ENCODE measurements at regions of chr11 and their contacts with region 1.

Region 1: DNA sequence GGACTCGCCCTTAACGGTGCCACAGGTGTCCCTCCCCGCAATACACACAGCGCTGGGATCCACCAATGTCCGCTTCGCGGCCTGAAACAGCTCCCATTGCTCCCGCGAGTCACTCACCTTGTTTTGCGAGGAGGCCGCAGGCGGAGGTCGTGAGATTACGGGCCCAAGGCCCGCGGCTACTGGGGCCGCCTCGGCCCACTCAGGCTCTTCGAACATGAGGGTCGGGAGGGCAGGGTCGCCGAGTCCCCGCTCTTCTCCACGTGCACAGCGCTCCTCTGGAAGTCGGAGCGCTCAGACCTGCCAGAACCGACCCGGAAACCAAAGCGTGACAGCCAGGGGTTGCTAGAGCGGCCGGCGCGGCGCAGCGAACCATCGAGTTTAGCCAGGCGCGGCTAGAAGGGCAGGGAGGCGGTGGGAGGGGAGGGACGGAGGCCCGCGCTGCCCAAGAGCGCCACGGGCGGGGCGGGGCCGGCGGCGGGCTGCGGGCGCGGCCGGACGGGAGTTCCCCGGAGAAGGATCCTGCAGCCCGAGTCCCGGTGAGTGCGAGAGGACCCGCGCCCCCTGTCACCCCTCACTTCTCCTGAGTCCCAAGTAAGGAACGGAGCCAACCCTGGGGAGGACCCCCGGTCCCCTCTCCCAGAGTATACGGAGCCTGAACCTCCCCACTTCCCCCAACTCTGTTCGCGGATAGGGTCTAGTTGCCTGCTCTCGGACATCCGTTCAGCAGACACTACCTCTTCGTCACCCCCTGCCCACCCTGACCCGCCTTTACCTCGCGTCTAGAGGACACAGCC is at the starts of genes ILK and RRP8:
- DNase-seq: peak; percentile 91 to 95 (median 93)
- ATAC-seq: peak; percentile 88
- H3K4me3 ChIP-seq: peak within 1 kb of the TSS; percentile 95
- H3K27ac ChIP-seq: peak within 1 kb of the TSS; percentile 87
- H3K4me1 ChIP-seq: peaks cover 31 to 32% of the 10 kb centered on the region in 2 experiments
- H3K27me3 ChIP-seq: no peaks in the 10 kb centered on the region
- CTCF ChIP-seq: 0 out of 6 replicates have a peak, but pooled peaks of 1 of the 3 experiments have one; percentile 22
- EP300 ChIP-seq: no peak
- POLR2A ChIP-seq: peak; percentile 84
- RAD21 ChIP-seq: peak; percentile 3 to 23; a peak in 2 of 4 replicates
- polyA plus RNA-seq, gene ILK: 49.3 to 85.1 TPM
- polyA plus RNA-seq, gene RRP8: 5.7 to 11.4 TPM

Region 2: GRCh38 chr11:6473481-6474422 is 129.7 kb before region 1 on chr11 and contains the start of gene TRIM3:
- CTCF ChIA-PET with region 1: no interaction called
- POLR2A ChIA-PET with region 1: interaction called, 7 read pairs
- in situ Hi-C with region 1: no loop called
- intact Hi-C with region 1: loop called (anchors 2 kb)
- DNase-seq: peak; percentile 86 to 99 (median 99)
- ATAC-seq: peak; percentile 88
- H3K4me3 ChIP-seq: peak within 1 kb of the TSS; percentile 65
- H3K27ac ChIP-seq: peak within 1 kb of the TSS; percentile 43
- H3K4me1 ChIP-seq: peaks cover 20 to 22% of the 10 kb centered on the region in 2 experiments; a peak in 4 of 5 replicates
- H3K27me3 ChIP-seq: no peaks in the 10 kb centered on the region
- CTCF ChIP-seq: peak in 2 of 3 experiments; percentile 18 to 41; a peak in 4 of 6 replicates
- EP300 ChIP-seq: no peak
- POLR2A ChIP-seq: no peak; the same call in none of the 2 replicates
- RAD21 ChIP-seq: no peak
- polyA plus RNA-seq, gene TRIM3: 0.45 to 0.81 TPM

Region 3: DNA sequence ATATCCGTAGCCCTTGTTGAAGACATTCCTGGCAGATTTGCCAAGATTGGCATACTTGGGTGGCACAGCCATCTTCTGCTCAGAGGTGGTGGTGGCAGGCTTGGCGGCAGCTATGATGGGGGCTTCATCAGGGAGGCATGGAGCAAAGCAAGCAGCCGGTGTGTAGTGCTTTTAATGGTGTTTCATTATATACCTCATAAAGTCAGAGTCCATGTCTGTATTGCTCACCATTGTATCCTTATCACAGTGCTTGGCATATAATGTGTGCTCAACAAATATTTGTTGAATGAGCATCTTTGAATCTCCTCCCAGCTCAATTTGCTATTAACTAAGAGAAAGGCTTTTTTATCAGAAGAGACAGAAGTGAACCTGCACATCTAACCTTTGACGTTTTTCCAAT is 114.2 kb before region 1 on chr11:
- CTCF ChIA-PET with region 1: no interaction called
- POLR2A ChIA-PET with region 1: no interaction called
- in situ Hi-C with region 1: no loop called
- intact Hi-C with region 1: no loop called
- DNase-seq: no peak
- ATAC-seq: no peak
- H3K4me3 ChIP-seq: no peak overlapping the region
- H3K27ac ChIP-seq: no peak overlapping the region
- H3K4me1 ChIP-seq: no peaks in the 10 kb centered on the region; a peak in 1 of 5 replicates
- H3K27me3 ChIP-seq: no peaks in the 10 kb centered on the region
- CTCF ChIP-seq: no peak
- EP300 ChIP-seq: no peak
- POLR2A ChIP-seq: no peak
- RAD21 ChIP-seq: no peak

Region 4: GRCh38 chr11:6568191-6568918 is 35.1 kb before region 1 on chr11:
- CTCF ChIA-PET with region 1: no interaction called
- POLR2A ChIA-PET with region 1: interaction called, 8 read pairs
- in situ Hi-C with region 1: no loop called
- intact Hi-C with region 1: loop called (anchors 2 kb)
- DNase-seq: peak; percentile 83 to 94 (median 89)
- ATAC-seq: peak; percentile 88
- H3K4me3 ChIP-seq: no peak overlapping the region
- H3K27ac ChIP-seq: peak overlapping the region; percentile 61
- H3K4me1 ChIP-seq: peaks cover 41 to 54% of the 10 kb centered on the region in 2 experiments
- H3K27me3 ChIP-seq: no peaks in the 10 kb centered on the region
- CTCF ChIP-seq: peak; percentile 21 to 50 (median 36); a peak in 5 of 6 replicates
- EP300 ChIP-seq: peak; percentile 64; the same call in 1 of the 2 replicates
- POLR2A ChIP-seq: no peak
- RAD21 ChIP-seq: no peak

Region 5: DNA sequence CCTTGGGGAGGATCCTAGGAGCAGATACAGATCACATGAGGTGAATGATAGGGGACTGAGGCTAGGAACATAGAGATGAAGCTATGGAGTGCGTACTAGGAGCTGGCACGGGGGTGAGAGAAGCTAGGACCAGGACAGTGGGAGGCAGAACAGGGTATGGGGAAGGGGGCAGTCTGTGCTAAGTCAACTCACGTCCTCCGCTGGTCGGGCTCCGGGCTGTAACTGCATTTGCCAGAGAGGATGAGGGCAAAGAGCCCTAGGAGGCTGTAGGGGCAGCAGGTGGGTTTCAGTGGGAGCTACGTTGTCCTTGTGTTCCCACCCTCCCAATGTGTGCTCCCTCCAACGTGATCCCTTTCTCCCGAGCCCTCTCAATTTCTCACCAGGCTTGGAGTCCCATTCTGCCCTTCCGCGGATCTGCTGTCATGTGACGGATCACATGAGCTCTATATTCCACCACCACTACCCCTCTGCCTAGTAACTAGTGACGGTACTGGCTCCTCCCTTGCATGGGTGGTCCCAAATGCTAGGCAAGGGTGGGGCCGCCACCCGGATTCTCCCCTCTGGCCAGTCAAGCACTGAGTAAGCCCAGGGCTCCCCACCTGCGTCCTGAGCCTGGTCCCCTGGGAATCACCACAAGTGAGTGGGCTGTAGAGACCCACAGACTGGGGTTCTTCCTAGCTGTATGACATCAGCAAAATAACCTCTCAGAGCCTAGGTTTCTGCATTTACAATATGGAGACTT is 15.7 kb after region 1 on chr11 and contains the start of gene TPP1:
- CTCF ChIA-PET with region 1: no interaction called
- POLR2A ChIA-PET with region 1: interaction called, 17 read pairs
- in situ Hi-C with region 1: no loop called
- intact Hi-C with region 1: no loop called
- DNase-seq: peak; percentile 92 to 97 (median 94)
- ATAC-seq: peak; percentile 97
- H3K4me3 ChIP-seq: peak within 1 kb of the TSS; percentile 71
- H3K27ac ChIP-seq: peak within 1 kb of the TSS; percentile 86
- H3K4me1 ChIP-seq: peaks cover 8 to 36% of the 10 kb centered on the region in 2 experiments
- H3K27me3 ChIP-seq: peaks cover 0 to 9% of the 10 kb centered on the region in 2 experiments; a peak in 1 of 5 replicates
- CTCF ChIP-seq: no peak
- EP300 ChIP-seq: no peak; the same call in 1 of the 2 replicates
- POLR2A ChIP-seq: peak; percentile 78
- RAD21 ChIP-seq: 0 out of 4 replicates have a peak, but pooled peaks of 1 of the 2 experiments have one; percentile 3
- polyA plus RNA-seq, gene TPP1: 9.4 to 15.7 TPM

Region 6: GRCh38 chr11:6667733-6668374 is 64.4 kb after region 1 on chr11:
- CTCF ChIA-PET with region 1: no interaction called
- POLR2A ChIA-PET with region 1: interaction called, 5 read pairs
- in situ Hi-C with region 1: no loop called
- intact Hi-C with region 1: loop called (anchors 5 kb)
- DNase-seq: peak; percentile 48 to 69 (median 52)
- ATAC-seq: peak; percentile 89
- H3K4me3 ChIP-seq: no peak overlapping the region
- H3K27ac ChIP-seq: peak overlapping the region; percentile 80
- H3K4me1 ChIP-seq: peaks cover 0 to 24% of the 10 kb centered on the region in 2 experiments; a peak in 4 of 5 replicates
- H3K27me3 ChIP-seq: no peaks in the 10 kb centered on the region
- CTCF ChIP-seq: peak; percentile 47 to 69 (median 67); a peak in 5 of 6 replicates
- EP300 ChIP-seq: no peak
- POLR2A ChIP-seq: no peak
- RAD21 ChIP-seq: peak; percentile 29 to 50

Region 7: GRCh38 chr11:6855971-6856541 is 252.6 kb after region 1 on chr11:
- CTCF ChIA-PET with region 1: no interaction called
- POLR2A ChIA-PET with region 1: no interaction called
- in situ Hi-C with region 1: no loop called
- intact Hi-C with region 1: no loop called
- DNase-seq: peak in 1 of 4 experiments; percentile 20
- ATAC-seq: no peak
- H3K4me3 ChIP-seq: no peak overlapping the region
- H3K27ac ChIP-seq: no peak overlapping the region
- H3K4me1 ChIP-seq: no peaks in the 10 kb centered on the region
- H3K27me3 ChIP-seq: no peaks in the 10 kb centered on the region
- CTCF ChIP-seq: no peak
- EP300 ChIP-seq: no peak
- POLR2A ChIP-seq: no peak
- RAD21 ChIP-seq: no peak